A549 (cell line): ENCODE measurements at regions of chr2 and their contacts with region 1.

Region 1: DNA sequence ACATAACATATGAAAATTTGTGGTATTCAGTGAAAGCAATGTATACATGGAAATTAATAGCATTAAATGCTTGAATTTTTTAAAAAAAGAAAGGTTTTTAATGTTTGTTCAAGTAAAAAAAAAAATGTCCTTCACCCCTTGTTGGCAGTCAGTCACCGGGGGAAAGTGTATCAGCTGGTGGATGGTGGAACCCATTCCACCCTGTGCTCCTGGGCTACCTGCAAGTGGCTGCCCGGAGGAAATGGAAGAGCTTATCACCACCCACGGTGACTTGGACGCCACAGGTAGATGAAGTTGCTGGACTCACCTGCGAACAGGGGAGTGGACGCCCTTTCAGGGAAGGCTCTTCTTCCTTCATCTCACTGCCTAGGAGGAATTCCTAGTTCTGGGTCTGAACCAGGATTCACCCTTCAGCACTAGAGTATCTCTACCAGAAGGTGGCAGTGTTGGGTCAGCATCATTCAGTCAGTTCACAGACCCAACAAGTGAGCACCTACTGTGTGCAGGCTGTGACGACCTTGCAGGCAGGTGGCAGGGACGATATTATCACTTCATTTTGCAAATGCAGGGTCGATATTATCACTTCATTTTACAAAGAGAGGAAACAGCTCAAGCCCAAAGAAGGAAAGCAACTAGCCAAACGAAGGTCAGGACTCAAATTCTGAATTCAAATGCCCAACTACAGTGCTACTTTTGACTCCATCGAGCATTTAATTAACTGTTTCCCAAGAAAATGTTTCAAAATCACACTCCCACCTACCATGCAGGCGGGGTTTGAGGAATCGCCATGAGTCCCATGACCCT is 35.8 kb downstream of the CIB4 start:
- DNase-seq: peak; percentile 73 to 78
- ATAC-seq: peak; percentile 79 to 93
- H3K4me3 ChIP-seq: no peak overlapping the region
- H3K27ac ChIP-seq: peak overlapping the region; percentile 57 to 80; a peak in 5 of 6 replicates
- H3K4me1 ChIP-seq: peaks cover 21% of the 10 kb centered on the region
- CTCF ChIP-seq: peak; percentile 97
- EP300 ChIP-seq: no peak
- POLR2A ChIP-seq: no peak
- RAD21 ChIP-seq: peak; percentile 99

Region 2: GRCh38 chr2:25700221-25700660 is 905.2 kb before region 1 on chr2:
- CTCF ChIA-PET with region 1: no interaction called
- POLR2A ChIA-PET with region 1: no interaction called
- DNase-seq: peak; percentile 55 to 70
- ATAC-seq: peak; percentile 75 to 82
- H3K4me3 ChIP-seq: no peak overlapping the region
- H3K27ac ChIP-seq: no peak overlapping the region
- H3K4me1 ChIP-seq: peaks cover 13% of the 10 kb centered on the region; the same call in 1 of the 3 replicates
- CTCF ChIP-seq: peak; percentile 68
- EP300 ChIP-seq: no peak
- POLR2A ChIP-seq: no peak
- RAD21 ChIP-seq: peak; percentile 63 to 77

Region 3: DNA sequence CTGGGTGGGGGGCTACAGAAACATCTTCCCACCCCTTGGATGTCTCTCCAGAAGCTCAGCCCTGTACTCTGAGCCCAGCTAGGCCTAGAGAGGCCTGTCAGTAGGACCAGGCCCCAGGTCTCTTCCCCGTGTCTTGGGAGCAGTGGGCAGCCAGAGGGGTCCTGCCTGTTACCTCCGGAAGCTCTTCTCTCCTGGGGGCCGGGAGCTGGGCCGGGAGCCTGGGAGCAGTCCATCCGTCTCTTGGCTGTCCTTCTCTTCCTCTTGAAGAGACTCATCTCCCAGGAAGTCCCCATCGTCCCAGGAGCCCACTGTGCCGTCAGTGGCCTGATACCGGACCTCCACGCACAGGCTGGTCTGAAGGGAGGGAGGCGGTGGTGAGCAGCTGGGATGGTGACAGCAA is 89.2 kb before region 1 on chr2:
- CTCF ChIA-PET with region 1: interaction called, 11 read pairs
- POLR2A ChIA-PET with region 1: no interaction called
- DNase-seq: no peak
- ATAC-seq: no peak
- H3K4me3 ChIP-seq: no peak overlapping the region
- H3K27ac ChIP-seq: no peak overlapping the region
- H3K4me1 ChIP-seq: no peaks in the 10 kb centered on the region
- CTCF ChIP-seq: no peak
- EP300 ChIP-seq: no peak
- POLR2A ChIP-seq: no peak
- RAD21 ChIP-seq: no peak

Region 4: DNA sequence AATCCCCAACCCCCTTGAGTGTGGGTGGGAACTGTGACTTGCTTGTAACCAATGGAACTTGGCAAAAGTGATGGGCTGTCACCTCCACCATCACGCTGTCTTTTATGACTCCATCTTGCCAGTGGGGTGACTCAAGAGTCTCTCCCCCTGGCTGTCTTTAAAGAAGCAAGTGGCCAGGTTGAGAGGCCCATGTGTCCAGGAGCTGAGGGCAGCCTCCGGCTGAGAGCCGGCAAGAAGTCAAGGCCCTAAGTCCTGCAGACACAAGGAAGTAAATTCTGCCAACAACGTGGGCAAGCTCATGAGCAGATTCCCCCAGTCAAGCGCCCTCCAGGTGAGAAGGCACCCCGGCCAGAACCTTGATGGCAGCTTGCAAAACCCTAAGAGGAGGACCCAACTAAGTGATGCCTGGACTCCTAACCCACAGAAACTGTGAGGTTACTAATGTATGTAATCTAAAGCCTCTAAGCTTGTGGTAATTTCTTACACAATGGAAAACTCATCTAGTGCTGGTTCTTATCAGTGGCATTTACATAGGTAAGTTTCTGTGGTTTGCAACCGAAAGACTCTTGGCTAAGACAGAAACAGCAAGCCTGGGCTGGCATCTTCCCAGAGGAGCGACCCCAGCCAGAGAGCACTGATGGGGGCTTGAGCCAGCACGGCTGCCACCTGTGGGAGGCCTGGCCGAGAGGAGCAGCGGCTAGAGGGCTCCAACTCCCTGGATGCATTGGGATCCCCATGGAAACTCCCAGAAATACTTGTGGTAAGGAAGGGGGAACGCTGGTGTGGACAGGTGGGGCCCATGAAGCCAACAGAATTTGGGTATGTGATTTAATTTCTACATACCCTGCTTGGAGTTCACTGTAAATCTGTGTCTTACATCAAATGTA is 13.5 kb before region 1 on chr2:
- CTCF ChIA-PET with region 1: interaction called, 104 read pairs
- POLR2A ChIA-PET with region 1: no interaction called
- DNase-seq: no peak
- ATAC-seq: no peak
- H3K4me3 ChIP-seq: no peak overlapping the region
- H3K27ac ChIP-seq: no peak overlapping the region
- H3K4me1 ChIP-seq: 0 out of 3 replicates have a peak, but pooled peaks cover 7% of the 10 kb centered on the region
- CTCF ChIP-seq: no peak
- EP300 ChIP-seq: no peak
- POLR2A ChIP-seq: no peak
- RAD21 ChIP-seq: no peak

Region 5: DNA sequence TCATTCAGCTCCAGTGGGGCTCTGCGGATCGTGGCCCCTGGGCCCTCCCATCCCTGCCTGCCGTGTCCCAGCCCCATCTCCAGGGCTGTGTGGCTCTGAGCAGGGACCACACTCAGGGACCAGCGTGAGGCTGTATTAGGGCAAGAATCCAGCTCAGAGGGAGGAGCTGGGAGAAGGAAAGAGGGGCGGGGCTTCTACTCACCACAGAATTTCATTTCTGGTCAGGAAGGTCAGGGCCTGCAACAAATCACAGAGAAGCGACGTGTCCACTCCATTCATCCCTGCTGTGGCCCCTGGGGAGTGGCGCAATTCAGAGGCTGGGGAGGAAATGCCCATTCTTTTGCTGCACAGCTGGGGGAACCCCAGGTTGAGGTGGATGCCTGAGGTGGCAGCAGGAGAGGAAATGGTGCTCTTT is 34.9 kb after region 1 on chr2:
- CTCF ChIA-PET with region 1: interaction called, 39 read pairs
- POLR2A ChIA-PET with region 1: no interaction called
- DNase-seq: no peak
- ATAC-seq: peak in 1 of 2 experiments; percentile 60; a peak in 3 of 6 replicates
- H3K4me3 ChIP-seq: no peak overlapping the region
- H3K27ac ChIP-seq: peak overlapping the region in 1 of 2 experiments; percentile 54; a peak in 3 of 6 replicates
- H3K4me1 ChIP-seq: peaks cover 6% of the 10 kb centered on the region; the same call in 2 of the 3 replicates
- CTCF ChIP-seq: no peak
- EP300 ChIP-seq: no peak
- POLR2A ChIP-seq: no peak
- RAD21 ChIP-seq: no peak

Region 6: GRCh38 chr2:26692897-26693849 is 87.8 kb after region 1 on chr2:
- CTCF ChIA-PET with region 1: interaction called, 17 read pairs
- POLR2A ChIA-PET with region 1: no interaction called
- DNase-seq: peak in 1 of 2 experiments; percentile 25
- ATAC-seq: peak; percentile 20 to 32; a peak in 4 of 6 replicates
- H3K4me3 ChIP-seq: peak overlapping the region; percentile 36
- H3K27ac ChIP-seq: peak overlapping the region in 1 of 2 experiments; percentile 40; a peak in 2 of 6 replicates
- H3K4me1 ChIP-seq: peaks cover 25% of the 10 kb centered on the region
- CTCF ChIP-seq: no peak
- EP300 ChIP-seq: no peak
- POLR2A ChIP-seq: no peak
- RAD21 ChIP-seq: no peak

Region 7: GRCh38 chr2:26720322-26721166 is 115.1 kb after region 1 on chr2:
- CTCF ChIA-PET with region 1: interaction called, 38 read pairs
- POLR2A ChIA-PET with region 1: no interaction called
- DNase-seq: peak; percentile 86 to 95
- ATAC-seq: peak; percentile 59 to 67
- H3K4me3 ChIP-seq: no peak overlapping the region
- H3K27ac ChIP-seq: peak overlapping the region; percentile 94
- H3K4me1 ChIP-seq: peaks cover 80% of the 10 kb centered on the region
- CTCF ChIP-seq: no peak
- EP300 ChIP-seq: peak; percentile 43 to 70; a peak in 3 of 5 replicates
- POLR2A ChIP-seq: no peak; the same call in 1 of the 2 replicates
- RAD21 ChIP-seq: 0 out of 5 replicates have a peak, but pooled peaks of 1 of the 2 experiments have one; percentile 34

Region 8: DNA sequence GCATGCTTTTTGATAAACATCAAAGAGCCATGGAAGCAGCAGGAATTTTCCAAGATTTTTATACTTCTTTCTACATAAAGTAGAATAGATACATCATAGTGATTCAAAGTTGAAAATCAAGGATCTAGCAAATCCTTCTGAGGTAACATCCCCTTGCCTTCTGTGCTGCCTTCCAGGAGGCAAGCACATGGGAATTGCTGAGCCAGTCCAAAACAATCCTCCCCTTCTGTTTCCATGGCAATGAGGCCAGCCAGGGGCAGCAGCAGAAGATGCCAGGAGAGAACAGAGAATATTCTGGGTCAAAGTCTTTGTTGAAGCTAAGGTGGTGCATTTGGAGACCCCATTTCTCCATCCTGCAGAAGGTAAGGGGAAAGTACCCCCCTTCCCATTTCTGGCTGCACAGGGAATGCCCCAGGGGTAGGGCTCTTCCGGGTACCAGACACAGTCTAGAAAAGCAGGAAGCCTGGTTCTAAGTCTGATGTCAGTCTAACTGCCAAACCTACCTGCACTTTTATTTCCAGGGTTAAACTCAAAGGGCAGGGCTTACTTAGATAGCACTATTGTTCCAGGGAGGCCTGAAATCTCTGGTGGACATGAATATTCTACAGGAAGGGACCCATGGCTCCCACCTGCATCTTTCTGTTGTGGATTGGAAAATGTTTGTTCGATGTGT is 202.5 kb after region 1 on chr2:
- CTCF ChIA-PET with region 1: no interaction called
- POLR2A ChIA-PET with region 1: no interaction called
- DNase-seq: no peak
- ATAC-seq: peak; percentile 40 to 49; a peak in 3 of 6 replicates
- H3K4me3 ChIP-seq: no peak overlapping the region
- H3K27ac ChIP-seq: no peak overlapping the region
- H3K4me1 ChIP-seq: no peaks in the 10 kb centered on the region
- CTCF ChIP-seq: no peak
- EP300 ChIP-seq: no peak
- POLR2A ChIP-seq: no peak
- RAD21 ChIP-seq: no peak